A673 (cell line): ENCODE measurements at regions of chr11 and their contacts with region 1.

Region 1: GRCh38 chr11:66466225-66467027 is at the start of gene PELI3:
- DNase-seq: peak; percentile 95
- H3K4me3 ChIP-seq: peak within 1 kb of the TSS; percentile 67
- H3K27ac ChIP-seq: peak within 1 kb of the TSS; percentile 70
- H3K4me1 ChIP-seq: no peaks in the 10 kb centered on the region
- H3K27me3 ChIP-seq: no peaks in the 10 kb centered on the region
- CTCF ChIP-seq: no peak
- total RNA-seq, gene PELI3: 15.4 and 18.5 TPM in 2 replicates

Region 2: DNA sequence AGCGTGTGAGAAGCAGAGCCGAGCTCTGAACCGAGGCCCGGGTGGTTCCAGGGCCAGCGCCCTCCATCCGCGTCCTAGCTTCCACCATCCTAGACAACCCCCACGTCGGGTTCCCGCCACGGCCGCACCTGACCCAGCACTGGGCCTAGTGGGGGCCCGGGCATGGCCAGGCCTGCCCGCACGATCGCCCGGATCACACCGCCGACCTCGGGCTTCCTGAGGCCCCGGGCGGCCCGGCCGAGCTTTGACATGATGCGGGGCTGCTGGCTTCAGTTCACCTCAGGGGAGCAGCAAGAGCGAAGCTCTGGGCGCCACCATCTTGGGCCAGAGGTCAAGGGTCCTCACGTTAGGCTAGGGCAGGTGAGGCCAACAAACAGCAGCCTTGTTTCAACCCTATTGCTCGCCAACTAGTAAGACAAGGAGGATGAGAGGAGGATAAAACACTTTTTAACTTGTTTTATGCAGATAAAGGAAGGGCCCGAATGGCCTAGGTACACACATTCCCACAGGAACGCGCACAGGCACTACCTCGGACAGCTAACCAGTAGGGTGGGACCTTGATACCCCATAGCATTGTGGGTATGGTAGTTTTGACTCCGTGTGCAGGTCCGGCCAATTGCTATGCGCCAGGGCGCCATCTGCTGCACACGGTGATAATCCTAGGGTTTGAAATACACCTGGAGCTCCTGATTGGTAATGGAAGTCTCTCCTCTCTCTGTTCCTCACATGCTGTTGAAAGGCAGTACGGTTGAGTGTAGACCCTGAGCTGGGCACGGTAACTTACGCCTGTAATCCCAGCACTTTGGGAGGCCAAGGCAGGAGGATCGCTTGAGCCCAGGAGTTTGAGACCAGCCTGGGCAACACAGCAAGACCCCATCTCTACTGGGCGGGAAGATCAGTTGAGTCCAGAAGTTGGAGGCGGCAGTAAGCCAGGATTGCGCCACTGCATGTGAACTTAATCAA is 27.6 kb before region 1 on chr11 and contains the start of gene MRPL11:
- CTCF ChIA-PET with region 1: interaction called, 17 read pairs
- POLR2A ChIA-PET with region 1: no interaction called
- intact Hi-C with region 1: no loop called
- DNase-seq: peak; percentile 97
- H3K4me3 ChIP-seq: peak within 1 kb of the TSS; percentile 66
- H3K27ac ChIP-seq: peak within 1 kb of the TSS; percentile 85
- H3K4me1 ChIP-seq: peaks cover 4% of the 10 kb centered on the region
- H3K27me3 ChIP-seq: no peaks in the 10 kb centered on the region
- CTCF ChIP-seq: peak; percentile 89
- total RNA-seq, gene MRPL11: 96.5 and 97.9 TPM in 2 replicates

Region 3: DNA sequence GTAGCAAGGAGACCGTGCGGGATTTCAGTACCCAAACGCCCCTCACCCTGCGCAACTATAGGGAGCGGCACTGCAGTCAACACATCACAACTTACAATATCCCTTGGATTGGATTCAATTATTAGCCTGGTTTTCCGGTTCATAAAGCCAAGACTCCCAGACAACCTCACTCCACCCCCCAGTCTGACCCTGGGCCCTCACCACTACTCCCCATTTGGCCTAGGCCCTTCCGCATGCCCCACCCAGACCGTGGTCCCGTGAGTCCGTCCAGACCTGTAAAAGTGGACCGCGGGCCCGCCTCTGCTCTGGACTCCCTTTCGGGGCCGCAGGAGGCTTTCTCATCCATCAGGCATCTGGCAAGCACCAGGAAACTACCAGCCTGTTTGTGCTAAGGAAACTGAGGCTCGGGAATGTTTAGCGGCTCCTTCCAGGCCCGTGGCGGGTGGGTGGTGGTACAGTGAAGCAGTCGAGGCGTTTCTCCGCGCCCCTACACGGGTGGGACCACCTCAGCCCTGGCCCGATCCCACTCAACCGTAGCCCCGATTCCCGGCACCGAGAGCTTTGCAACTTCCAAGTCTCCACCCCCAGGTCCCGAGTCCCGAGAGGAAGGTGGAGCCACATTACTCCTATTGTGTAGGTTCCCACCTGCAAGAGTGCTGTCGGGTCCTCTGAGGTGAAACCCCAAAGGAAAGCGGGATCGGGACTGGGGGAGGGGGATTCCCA is 13.1 kb after region 1 on chr11:
- CTCF ChIA-PET with region 1: interaction called, 12 read pairs
- POLR2A ChIA-PET with region 1: interaction called, 8 read pairs
- intact Hi-C with region 1: no loop called
- DNase-seq: no peak
- H3K4me3 ChIP-seq: peak overlapping the region; percentile 87
- H3K27ac ChIP-seq: peak overlapping the region; percentile 91
- H3K4me1 ChIP-seq: no peaks in the 10 kb centered on the region
- H3K27me3 ChIP-seq: no peaks in the 10 kb centered on the region
- CTCF ChIP-seq: no peak

Region 4: DNA sequence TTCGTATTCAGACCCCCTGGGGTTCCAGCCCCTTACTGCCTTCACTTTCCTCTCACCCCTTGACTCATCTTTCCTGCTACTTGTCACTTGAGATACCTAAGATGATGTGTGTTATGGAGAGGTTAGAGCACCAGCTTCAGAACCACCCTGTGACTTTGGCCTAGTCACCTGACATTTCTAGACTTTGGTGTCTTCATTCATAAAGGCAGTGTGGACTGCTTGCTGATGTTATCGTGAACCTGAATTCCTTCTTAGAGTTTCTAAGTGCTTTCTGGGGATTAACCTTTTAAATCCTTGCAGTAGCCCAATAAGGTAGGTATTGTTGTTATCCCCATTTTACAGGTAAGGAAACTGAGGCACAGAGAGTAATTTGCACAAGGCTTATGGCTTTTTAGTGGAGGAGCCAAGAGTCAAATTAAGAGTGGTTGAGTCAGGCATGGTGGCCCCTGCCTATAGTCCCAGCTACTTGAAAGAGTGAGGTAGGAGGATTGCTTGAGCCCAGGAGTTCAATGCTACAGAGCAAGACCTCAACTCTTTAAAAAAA is 38.9 kb after region 1 on chr11:
- CTCF ChIA-PET with region 1: no interaction called
- POLR2A ChIA-PET with region 1: no interaction called
- intact Hi-C with region 1: no loop called
- DNase-seq: no peak
- H3K4me3 ChIP-seq: no peak overlapping the region
- H3K27ac ChIP-seq: no peak overlapping the region
- H3K4me1 ChIP-seq: peaks cover 4% of the 10 kb centered on the region
- H3K27me3 ChIP-seq: no peaks in the 10 kb centered on the region
- CTCF ChIP-seq: no peak